ENCODE measurements at regions of chr4 and their contacts with region 1.

Region 1: DNA sequence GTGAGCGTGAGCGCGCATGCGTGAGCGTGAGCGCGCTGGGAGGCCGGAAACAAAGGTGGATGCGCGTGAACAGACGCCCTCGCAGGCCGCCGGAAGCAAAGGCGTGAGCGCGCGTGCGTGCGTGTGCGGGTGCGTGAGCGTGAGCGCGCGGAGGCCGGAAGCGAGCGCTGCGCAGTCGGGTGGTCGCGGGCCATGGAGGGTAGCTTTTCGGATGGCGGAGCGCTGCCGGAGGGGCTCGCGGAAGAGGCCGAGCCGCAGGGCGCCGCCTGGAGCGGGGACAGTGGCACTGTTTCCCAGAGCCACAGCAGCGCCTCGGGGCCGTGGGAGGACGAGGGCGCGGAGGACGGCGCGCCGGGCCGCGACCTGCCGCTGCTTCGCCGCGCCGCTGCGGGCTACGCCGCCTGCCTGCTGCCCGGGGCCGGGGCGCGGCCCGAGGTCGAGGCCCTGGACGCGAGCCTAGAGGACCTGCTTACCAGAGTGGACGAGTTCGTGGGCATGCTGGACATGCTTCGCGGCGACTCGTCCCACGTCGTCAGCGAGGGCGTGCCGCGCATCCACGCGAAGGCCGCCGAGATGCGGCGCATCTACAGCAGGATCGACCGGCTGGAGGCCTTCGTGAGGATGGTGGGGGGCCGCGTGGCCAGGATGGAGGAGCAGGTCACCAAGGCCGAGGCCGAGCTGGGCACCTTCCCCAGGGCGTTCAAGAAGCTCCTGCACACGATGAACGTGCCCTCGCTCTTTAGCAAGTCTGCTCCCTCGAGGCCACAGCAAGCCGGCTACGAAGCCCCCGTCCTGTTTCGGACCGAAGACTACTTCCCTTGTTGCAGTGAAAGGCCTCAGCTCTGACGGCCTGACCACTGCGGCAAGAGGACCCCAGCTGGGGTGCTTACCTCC is at the start of gene BLOC1S4:
- DNase-seq: peak; percentile 87
- H3K4me3 Mint-ChIP-seq: peak within 1 kb of the TSS; percentile 80
- H3K27ac Mint-ChIP-seq: peak within 1 kb of the TSS; percentile 81
- H3K4me1 Mint-ChIP-seq: peaks cover 13% of the 10 kb centered on the region
- H3K27me3 Mint-ChIP-seq: no peaks in the 10 kb centered on the region
- CTCF ChIP-seq: no peak
- total RNA-seq, gene BLOC1S4: 10.6 and 13.0 TPM in 2 replicates

Region 2: GRCh38 chr4:6673660-6674499 is 42.4 kb before region 1 on chr4:
- CTCF ChIA-PET with region 1: interaction called, 9 read pairs
- POLR2A ChIA-PET with region 1: interaction called, 101 read pairs
- intact Hi-C with region 1: loop called (anchors 1 kb)
- DNase-seq: peak; percentile 93
- H3K4me3 Mint-ChIP-seq: peak overlapping the region; percentile 88
- H3K27ac Mint-ChIP-seq: peak overlapping the region; percentile 71
- H3K4me1 Mint-ChIP-seq: peaks cover 22% of the 10 kb centered on the region
- H3K27me3 Mint-ChIP-seq: no peaks in the 10 kb centered on the region
- CTCF ChIP-seq: no peak

Region 3: DNA sequence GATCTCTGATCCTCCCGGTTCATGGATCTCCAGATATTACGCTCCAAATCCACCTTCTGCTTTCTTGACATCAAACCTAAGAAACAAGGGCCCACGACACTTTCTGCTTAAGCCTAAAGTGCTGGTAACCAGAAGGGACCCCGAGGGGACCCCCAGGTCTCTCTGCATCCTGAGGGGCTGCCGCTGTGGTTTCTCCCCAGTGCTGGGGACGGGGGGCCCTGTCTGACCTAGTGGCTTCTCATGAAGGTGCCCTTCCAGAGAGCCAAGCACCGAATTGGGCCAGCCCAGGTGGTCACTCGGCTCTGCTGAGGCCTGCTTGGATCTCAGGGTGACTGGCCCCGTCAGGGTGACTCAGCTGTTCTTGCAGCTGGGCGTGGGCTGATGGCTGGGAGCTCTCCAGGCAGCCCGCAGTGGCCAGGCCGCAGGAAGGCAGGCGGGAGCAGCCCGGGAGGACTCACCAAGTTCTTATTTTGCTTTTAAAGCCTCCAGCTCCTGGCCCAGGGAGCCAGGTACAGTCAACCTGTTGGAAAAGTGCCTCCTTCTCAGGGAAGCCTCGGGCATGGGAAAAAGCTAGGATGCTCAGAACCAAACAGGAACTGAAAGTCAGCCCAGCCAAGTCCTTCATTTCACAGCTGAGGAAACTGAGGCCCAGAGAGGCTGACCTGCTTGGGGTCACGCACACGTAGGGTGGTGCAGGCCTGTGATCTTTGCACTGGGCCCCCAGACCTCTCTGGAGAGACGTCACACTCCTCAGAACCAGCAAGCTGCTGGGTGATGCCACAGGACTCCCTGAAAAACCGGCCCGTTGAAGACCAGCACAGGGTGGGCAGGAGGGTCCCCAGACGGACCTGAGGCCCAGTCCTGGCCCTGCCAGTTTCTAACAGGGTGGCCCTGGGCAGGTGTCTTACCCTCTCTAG is 16.4 kb after region 1 on chr4:
- CTCF ChIA-PET with region 1: interaction called, 10 read pairs
- POLR2A ChIA-PET with region 1: interaction called, 7 read pairs
- intact Hi-C with region 1: no loop called
- DNase-seq: peak; percentile 87
- H3K4me3 Mint-ChIP-seq: no peak overlapping the region
- H3K27ac Mint-ChIP-seq: peak overlapping the region; percentile 97
- H3K4me1 Mint-ChIP-seq: peaks cover 4% of the 10 kb centered on the region
- H3K27me3 Mint-ChIP-seq: no peaks in the 10 kb centered on the region
- CTCF ChIP-seq: no peak

Region 4: GRCh38 chr4:6783053-6783981 is 67.1 kb after region 1 on chr4:
- CTCF ChIA-PET with region 1: interaction called, 7 read pairs
- POLR2A ChIA-PET with region 1: interaction called, 4 read pairs
- intact Hi-C with region 1: loop called (anchors 5 kb)
- DNase-seq: peak; percentile 88
- H3K4me3 Mint-ChIP-seq: peak overlapping the region; percentile 78
- H3K27ac Mint-ChIP-seq: no peak overlapping the region
- H3K4me1 Mint-ChIP-seq: peaks cover 22% of the 10 kb centered on the region
- H3K27me3 Mint-ChIP-seq: no peaks in the 10 kb centered on the region
- CTCF ChIP-seq: no peak

Region 5: DNA sequence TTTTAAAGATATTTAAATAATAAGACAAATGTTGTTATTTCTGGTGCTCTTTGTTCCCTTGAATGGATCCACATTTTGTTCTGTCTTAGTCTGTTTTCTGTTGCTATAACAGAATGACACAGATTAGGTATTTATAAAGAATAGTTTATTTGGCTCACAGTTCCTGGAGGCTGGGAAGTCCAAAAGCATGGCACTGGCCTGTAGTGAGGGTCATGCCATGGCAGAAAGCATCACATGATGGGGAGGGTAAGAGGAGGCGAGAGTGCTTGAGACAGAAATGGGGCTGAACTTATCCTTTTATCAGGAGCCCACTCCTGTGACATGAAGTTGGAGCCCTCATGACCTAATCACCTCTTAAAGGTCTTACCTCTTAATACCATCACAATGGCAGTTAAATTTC is 104.4 kb after region 1 on chr4:
- CTCF ChIA-PET with region 1: no interaction called
- POLR2A ChIA-PET with region 1: no interaction called
- intact Hi-C with region 1: no loop called
- DNase-seq: no peak
- H3K4me3 Mint-ChIP-seq: no peak overlapping the region
- H3K27ac Mint-ChIP-seq: no peak overlapping the region
- H3K4me1 Mint-ChIP-seq: peaks cover 5% of the 10 kb centered on the region
- H3K27me3 Mint-ChIP-seq: no peaks in the 10 kb centered on the region
- CTCF ChIP-seq: no peak

Measured in MCF 10A (cell line).